ENCODE measurements at regions of chr11 and their contacts with region 1.

Region 1: GRCh38 chr11:75280227-75280701 is 39.7 kb downstream of the TPBGL start:
- DNase-seq: peak; percentile 75
- H3K4me3 ChIP-seq: no peak overlapping the region
- H3K27ac ChIP-seq: peak overlapping the region; percentile 59
- H3K4me1 ChIP-seq: peaks cover 22% of the 10 kb centered on the region
- H3K27me3 ChIP-seq: no peaks in the 10 kb centered on the region
- CTCF ChIP-seq: peak; percentile 99

Region 2: GRCh38 chr11:75214411-75214821 is 65.8 kb before region 1 on chr11:
- intact Hi-C with region 1: no loop called
- DNase-seq: peak; percentile 77
- H3K4me3 ChIP-seq: no peak overlapping the region
- H3K27ac ChIP-seq: no peak overlapping the region
- H3K4me1 ChIP-seq: no peaks in the 10 kb centered on the region
- H3K27me3 ChIP-seq: peaks cover 66% of the 10 kb centered on the region
- CTCF ChIP-seq: peak; percentile 44

Region 3: DNA sequence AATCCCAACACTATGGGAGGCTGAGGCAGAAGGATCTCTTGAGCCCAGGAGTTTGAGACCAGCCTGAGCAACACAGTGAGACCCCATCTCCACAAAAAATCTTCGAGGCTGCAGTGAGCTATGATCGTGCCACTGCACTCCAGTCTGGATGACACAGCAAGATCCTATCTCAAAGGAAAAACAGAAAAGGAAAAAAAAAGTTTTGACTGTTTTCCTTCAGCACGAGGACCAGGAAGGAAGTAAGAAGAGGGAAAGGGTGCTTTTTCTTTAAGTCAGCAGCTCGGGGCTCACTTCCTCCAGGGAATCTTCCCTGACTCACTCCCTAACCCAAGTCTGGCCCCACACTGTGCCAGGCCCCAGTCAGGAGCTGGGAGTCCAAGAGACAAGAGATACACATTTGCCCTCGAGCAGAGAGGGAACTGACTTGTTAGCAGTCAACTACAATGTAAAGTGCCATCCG is 57.0 kb after region 1 on chr11:
- intact Hi-C with region 1: loop called (anchors 10 kb)
- DNase-seq: no peak
- H3K4me3 ChIP-seq: no peak overlapping the region
- H3K27ac ChIP-seq: peak overlapping the region; percentile 94
- H3K4me1 ChIP-seq: peaks cover 87% of the 10 kb centered on the region
- H3K27me3 ChIP-seq: no peaks in the 10 kb centered on the region
- CTCF ChIP-seq: no peak

Region 4: GRCh38 chr11:75383246-75383645 is 103.0 kb after region 1 on chr11:
- intact Hi-C with region 1: loop called (anchors 2 kb)
- DNase-seq: no peak
- H3K4me3 ChIP-seq: no peak overlapping the region
- H3K27ac ChIP-seq: no peak overlapping the region
- H3K4me1 ChIP-seq: peaks cover 16% of the 10 kb centered on the region
- H3K27me3 ChIP-seq: no peaks in the 10 kb centered on the region
- CTCF ChIP-seq: no peak